Right ventricle myocardium inferior (tissue), 1 donor: ENCODE measurements at regions of chr12 and their contacts with region 1.

Region 1: DNA sequence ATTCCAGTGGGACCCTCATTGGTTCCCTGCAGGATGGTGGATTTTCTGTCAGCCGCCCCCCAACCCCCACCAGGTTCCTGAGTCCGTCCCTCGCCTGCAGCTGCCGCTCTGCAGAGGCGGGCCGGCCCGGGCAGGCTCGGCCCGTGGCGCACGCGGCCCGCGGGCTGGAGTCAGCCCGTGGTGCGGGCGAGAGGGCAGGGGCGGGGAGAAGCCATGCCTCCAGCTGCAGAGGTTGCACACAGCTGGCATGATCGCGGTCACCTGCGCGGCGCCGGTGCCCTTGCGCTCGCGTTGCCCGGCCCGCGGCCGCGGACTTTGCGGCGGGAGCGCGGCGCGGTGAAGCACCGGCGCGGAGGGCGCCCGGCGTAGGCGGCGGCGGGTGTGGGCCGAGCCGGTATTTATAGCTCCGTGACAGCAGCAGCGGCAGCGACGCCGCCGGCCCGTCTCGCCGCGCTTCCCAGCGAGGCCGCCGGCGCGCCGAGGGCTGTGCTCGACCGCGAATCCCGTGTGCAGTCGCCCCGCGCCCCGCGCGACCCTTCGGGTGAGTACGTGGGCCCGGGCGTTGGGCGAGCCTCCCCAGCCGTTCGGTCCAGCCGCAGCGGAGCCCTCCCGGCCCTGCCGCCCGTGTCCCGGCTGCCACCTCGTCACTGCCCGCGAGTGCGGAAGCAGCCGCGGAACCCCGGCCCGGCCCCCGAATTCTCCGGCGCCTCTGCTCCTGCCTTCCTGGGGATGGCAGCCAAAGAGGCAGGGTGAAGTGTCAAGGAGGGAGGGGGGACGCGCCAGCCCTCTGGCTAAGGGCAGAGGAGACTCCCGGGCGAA is at the start of gene TMEM117:
- DNase-seq: peak; percentile 92
- ATAC-seq: peak; percentile 94
- total RNA-seq, gene TMEM117: 7.1 TPM

Region 2: DNA sequence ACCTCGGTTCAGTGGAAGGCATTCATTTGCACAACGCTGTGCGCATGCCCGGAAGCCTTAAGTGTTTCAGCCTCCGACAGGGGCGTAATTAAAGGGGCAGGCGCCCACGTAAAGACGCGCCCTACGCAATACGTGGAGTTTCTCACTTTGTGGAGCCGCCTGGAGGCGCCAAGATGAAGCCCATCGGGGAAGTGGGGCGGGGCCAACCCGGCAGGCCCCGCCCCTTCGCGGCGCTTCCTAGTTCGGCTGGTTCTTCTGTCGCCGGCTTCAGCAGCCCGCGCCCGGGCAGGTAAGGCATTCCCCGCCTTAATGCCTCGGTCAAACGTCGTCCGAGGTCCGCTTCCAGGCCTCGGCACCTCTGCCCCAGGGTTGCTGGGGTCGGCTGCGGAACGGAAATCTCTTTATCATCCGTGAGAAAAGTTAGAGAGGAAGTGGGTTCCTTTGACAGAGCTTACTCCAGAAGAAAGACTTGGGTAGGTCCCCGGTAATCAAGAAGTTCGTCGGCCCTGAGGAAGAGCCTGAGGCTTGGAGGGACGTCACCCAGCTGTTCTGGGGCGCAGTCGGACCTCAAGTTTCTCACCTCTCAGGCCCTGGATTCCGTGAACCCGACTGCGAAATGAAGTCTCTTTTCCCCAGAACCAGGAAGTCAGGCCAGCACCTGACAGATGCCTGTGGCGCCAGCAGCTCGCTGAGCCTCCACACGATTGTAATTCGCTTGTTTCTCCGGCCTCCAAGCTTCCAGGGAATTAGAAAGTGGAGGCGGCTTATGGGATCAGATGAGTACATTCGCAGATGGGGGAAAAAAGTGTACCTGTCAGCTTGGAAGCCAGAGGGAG is 76.9 kb before region 1 on chr12 and contains the starts of genes IRAK4 and PUS7L:
- intact Hi-C with region 1: loop called (anchors 2 kb)
- DNase-seq: peak; percentile 98
- ATAC-seq: peak; percentile 100
- total RNA-seq, gene IRAK4: 6.2 TPM
- total RNA-seq, gene PUS7L: 3.5 TPM

Region 3: DNA sequence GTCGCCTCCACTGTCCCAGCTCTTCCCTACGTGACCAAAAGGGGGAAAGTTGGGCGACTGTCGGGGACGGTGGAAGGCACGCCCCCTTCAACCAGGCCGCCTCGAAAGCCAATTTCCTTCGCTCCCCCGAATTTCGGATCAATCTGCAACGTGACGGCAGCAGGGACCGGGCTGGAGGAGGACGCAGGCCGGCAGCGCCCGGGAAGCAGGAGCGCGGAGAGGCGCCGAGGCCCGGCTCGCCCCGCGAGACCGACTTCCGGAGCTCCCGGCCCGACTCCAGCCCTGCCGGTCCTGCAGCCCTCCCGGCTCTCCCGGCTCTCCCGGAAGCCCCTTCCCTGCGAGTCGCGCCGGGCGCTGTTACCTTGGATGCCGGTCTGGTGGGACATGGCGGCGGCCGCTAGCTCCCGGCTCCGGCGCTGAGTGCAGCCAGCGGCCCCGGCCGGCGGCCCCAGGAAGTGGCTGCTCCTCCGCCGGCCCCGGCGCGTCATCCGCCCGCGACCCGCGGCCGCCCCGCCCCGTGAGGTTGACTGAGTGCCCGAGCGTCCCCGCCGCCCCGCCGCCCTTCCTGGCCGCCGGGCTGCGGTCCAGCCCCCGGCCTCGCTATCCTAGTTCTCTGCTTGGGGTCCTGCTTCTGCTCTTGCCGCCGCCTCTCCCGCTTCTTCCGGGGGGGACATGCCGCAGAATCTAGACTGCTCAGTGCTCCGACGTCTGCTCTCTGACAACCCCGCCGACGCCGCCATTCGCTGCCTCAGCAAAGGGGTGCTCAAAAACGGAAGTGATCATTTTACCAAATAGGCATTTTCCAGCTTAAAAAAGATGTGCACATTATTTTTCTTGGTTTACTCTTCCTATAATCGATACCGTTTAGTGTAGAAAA is 29.8 kb before region 1 on chr12 and contains the start of gene TWF1:
- intact Hi-C with region 1: loop called (anchors 2 kb)
- DNase-seq: peak; percentile 95
- ATAC-seq: peak; percentile 100
- total RNA-seq, gene TWF1: 14.0 TPM